ENCODE measurements at regions of chr12 and their contacts with region 1.

Region 1: DNA sequence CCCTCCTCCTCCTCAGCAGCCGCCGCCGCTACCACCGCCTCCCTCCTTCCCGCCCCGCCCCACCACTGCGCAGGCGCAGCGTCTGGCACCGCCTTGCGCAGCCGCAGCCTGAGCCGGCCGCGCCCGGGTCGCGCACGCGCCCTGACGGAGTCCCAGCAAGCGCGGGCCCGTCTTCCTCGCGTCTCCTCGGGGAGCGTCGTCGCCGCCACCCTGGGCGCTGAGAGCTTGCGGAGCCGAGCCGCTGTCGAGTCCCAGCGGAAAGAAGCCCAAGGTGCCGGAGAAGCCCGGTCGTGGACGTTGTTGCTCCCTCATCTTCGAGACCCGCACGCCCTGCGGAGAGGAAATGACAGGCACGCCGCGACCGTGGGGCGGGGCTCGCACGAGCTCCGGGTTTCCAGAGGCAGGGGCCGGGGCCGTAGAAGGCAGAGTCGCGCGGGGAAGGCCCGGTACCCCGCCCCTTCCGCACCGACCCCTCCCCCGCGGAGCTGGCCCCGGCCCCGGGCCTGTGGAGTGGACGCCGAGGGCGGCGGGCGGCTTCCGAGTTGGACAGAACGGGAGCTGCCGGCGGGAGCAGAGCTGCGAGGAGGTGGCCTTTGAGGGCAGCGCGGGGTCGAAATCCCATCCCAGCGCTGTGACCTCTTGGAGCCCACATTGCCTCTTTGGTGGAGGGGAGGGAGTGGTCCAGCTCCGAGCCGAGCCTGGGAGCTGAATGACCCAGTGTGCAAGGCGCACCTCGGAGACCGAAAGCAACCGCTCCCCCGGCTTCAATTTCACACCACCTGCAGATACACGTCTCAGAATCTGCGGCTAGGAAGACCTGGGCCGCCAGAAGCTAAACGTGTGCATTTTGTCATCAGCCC is 469 bp upstream of the RAB35 start:
- DNase-seq: peak; percentile 99
- ATAC-seq: peak; percentile 68
- H3K4me3 Mint-ChIP-seq: peak overlapping the region; percentile 85
- H3K27ac Mint-ChIP-seq: peak overlapping the region; percentile 87
- H3K4me1 Mint-ChIP-seq: peaks cover 77% of the 10 kb centered on the region
- H3K27me3 Mint-ChIP-seq: no peaks in the 10 kb centered on the region

Region 2: GRCh38 chr12:119876761-119877638 is 240.0 kb before region 1 on chr12 and contains the start of gene CIT:
- CTCF ChIA-PET with region 1: no interaction called
- POLR2A ChIA-PET with region 1: no interaction called
- intact Hi-C with region 1: loop called in 1 of 2 experiments (anchors 1 kb)
- DNase-seq: peak; percentile 93
- ATAC-seq: peak; percentile 100
- H3K4me3 Mint-ChIP-seq: peak within 1 kb of the TSS; percentile 82
- H3K27ac Mint-ChIP-seq: peak within 1 kb of the TSS; percentile 63
- H3K4me1 Mint-ChIP-seq: peaks cover 13% of the 10 kb centered on the region
- H3K27me3 Mint-ChIP-seq: no peaks in the 10 kb centered on the region
- total RNA-seq, gene CIT: 54.6 to 71.5 TPM

Region 3: GRCh38 chr12:119988782-119989668 is 128.0 kb before region 1 on chr12 and contains the start of gene BICDL1:
- CTCF ChIA-PET with region 1: interaction called, 5 read pairs
- POLR2A ChIA-PET with region 1: interaction called, 14 read pairs
- intact Hi-C with region 1: loop called (anchors 1 to 2 kb)
- DNase-seq: peak; percentile 99
- ATAC-seq: peak; percentile 87
- H3K4me3 Mint-ChIP-seq: peak within 1 kb of the TSS; percentile 90
- H3K27ac Mint-ChIP-seq: peak within 1 kb of the TSS; percentile 92
- H3K4me1 Mint-ChIP-seq: peaks cover 46% of the 10 kb centered on the region
- H3K27me3 Mint-ChIP-seq: no peaks in the 10 kb centered on the region
- total RNA-seq, gene BICDL1: 106 to 132 TPM

Region 4: DNA sequence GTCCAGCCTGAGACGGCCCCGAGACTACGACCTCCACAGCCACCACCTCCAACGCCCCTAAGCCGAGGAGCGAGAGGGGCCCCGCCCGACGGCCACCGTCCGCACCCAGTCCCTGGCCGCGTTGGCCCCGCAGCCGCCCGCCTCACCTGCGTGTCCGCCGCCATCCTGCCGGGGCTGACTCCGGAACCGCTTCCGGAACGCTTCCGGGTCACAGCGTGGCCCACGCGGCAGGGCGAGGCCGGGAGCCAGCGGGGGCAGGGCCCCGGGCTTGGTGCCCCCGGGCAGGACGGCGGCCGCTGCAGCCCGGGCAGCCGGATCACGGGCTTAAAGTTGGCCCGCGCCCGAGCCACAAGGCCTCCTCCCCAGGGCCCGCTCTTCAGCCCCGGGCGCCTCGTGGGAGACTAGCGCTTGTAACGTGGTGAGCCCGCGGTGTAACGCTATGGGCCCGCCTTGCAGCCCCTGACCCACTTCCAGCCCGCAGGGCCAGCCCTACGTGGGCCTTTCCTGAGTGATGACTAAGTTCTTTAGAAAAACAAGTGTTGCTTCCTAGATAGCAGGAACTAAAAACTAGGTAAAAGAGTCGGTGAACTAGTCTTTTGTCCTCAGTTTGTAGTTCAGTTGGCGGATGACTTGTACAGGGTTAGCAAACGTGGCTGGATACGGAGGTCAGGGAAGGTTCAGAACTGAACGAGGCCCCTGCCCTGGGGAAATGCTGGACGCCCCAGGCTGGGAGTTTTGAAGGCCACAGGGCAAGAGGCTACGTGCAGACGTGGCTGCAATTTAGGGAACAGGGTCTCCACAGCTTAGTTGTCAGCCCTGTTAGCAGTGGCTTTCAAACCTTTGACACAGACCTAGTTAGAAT is 77.7 kb after region 1 on chr12 and contains the start of gene GCN1:
- CTCF ChIA-PET with region 1: interaction called, 4 read pairs
- POLR2A ChIA-PET with region 1: interaction called, 88 read pairs
- intact Hi-C with region 1: loop called in 1 of 2 experiments (anchors 2 kb)
- DNase-seq: peak; percentile 93
- ATAC-seq: peak; percentile 81
- H3K4me3 Mint-ChIP-seq: peak within 1 kb of the TSS; percentile 98
- H3K27ac Mint-ChIP-seq: peak within 1 kb of the TSS; percentile 92
- H3K4me1 Mint-ChIP-seq: peaks cover 45% of the 10 kb centered on the region
- H3K27me3 Mint-ChIP-seq: no peaks in the 10 kb centered on the region
- total RNA-seq, gene GCN1: 125 to 139 TPM

Region 5: DNA sequence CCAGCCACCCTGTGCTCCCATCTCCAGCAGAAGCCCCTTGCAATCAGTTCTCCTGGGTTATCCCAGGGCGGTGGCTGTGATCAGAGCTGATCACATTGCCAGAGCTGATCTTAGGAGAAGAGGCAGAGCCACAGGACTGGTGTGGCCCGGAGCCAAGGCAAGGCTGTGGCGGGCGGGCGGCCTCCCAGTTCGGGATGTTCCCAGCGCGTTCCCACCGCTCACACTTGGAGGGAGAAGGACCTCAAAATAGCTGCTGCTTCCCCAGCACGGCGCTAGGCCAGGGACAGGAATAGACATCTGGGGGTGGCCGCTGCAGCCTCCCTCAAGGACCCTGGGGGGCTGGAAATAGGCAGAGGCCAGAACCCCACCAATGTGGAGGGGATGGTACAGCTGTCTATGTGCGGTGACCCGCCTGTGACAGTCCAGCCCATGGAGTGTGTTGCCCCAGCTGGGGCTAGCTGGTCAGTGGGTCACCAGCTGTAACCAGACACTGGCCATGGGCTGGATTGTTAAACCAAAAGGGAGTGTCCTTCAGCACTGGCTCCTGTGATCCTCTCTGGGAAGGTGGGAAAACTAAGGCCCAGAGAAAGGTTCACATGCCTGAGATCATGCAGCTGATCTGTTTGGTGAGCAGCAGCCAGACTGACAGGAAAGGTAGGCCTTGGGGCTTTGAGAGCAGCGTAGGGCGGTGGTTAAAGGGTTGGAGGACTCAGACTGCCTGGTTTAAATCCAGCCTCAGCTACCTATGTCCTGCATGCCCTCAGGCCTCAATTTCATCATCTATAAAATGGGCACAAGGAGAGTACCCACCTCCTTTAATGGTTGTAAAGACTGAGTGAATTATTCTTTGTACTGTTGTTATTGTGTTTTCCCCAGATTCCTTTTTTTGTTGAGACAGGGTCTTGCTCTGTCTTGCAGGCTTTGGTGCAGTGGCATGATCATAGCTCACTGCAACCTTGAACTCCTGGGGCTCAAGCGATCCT is 472.2 kb after region 1 on chr12:
- CTCF ChIA-PET with region 1: no interaction called
- POLR2A ChIA-PET with region 1: no interaction called
- intact Hi-C with region 1: no loop called
- DNase-seq: no peak
- ATAC-seq: no peak
- H3K4me3 Mint-ChIP-seq: no peak overlapping the region
- H3K27ac Mint-ChIP-seq: no peak overlapping the region
- H3K4me1 Mint-ChIP-seq: peaks cover 1% of the 10 kb centered on the region
- H3K27me3 Mint-ChIP-seq: peaks cover 6% of the 10 kb centered on the region

Measured in activated CD4-positive, alpha-beta T cell treated with anti-CD3 and anti-CD28 coated beads for 36 hours (primary cell).